ENCODE measurements at regions of chr11 and their contacts with region 1.

Region 1: DNA sequence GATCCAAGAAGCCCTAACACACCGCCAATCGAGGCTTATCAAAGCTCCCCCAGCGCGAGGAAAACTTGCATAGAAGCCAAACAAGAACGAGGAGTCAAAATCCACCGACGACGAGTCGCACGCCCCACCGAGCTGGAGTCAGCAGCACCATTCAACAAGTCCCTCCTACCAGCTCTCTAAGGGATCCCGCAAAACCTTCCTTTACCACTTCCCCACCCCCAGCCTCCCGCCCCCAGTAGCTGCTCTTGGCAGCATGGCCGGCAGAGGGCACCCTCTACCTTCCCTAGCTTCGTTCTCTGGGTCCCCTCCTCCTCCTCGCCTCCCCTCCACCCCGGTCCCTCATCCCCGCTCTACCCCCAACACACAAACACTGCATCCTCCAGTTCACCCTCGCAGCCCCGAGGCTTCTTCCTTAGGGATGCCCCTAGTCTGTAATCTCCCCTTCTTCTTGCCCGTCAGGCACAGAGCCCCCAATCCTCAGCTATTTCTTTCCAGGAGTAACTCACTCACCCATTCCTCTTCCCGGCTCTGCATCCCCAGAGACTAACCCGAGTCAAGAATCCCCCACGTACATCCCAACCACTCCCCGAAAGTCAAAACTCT is 1.3 kb downstream of the BDNF start:
- DNase-seq: peak; percentile 89
- H3K4me3 Mint-ChIP-seq: peak overlapping the region; percentile 97
- H3K27ac Mint-ChIP-seq: no peak overlapping the region
- H3K4me1 Mint-ChIP-seq: peaks cover 11% of the 10 kb centered on the region
- H3K27me3 Mint-ChIP-seq: no peaks in the 10 kb centered on the region
- CTCF ChIP-seq: peak; percentile 84

Region 2: DNA sequence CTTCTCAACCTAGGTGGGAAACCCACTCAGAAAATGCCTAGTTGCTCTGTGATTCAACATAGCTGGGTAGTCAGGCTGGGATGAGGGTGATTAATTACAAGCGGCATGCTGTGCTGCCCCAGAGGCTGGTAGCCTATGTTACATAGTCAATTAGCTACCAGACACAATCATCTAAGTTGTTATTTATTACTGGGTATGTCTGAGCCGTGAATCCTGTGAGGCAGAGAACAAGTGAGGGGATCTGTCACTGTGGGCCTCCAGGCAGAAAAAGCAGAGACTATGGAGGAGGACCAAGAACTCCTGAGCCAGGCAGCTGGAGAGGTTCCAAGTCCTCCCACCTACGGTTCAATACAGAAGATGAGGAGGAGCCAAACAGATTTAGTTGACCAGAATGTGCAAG is 187.9 kb after region 1 on chr11:
- CTCF ChIA-PET with region 1: no interaction called
- POLR2A ChIA-PET with region 1: no interaction called
- intact Hi-C with region 1: no loop called
- DNase-seq: no peak
- H3K4me3 Mint-ChIP-seq: no peak overlapping the region
- H3K27ac Mint-ChIP-seq: no peak overlapping the region
- H3K4me1 Mint-ChIP-seq: peaks cover 15% of the 10 kb centered on the region
- H3K27me3 Mint-ChIP-seq: peaks cover 13% of the 10 kb centered on the region
- CTCF ChIP-seq: no peak

Region 3: DNA sequence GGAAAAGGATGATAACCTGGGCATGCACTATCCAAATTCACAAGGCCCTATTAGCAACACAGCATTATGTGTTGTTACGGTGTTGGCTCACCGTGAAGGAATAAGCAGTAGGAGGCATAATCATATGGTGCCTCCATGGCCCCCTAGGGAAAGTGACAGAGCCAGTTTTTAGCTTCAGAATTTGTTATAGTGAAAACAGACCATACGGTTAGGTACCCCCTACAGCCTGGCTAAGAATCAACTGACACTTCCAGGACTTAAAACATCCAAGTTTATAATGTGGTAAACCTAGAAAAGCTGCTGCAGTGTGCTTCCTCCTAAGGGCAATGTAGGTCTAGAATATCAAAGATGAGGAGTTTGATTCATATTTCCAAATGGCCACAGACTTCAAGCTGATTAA is 378.5 kb after region 1 on chr11:
- CTCF ChIA-PET with region 1: interaction called, 10 read pairs
- POLR2A ChIA-PET with region 1: no interaction called
- intact Hi-C with region 1: no loop called
- DNase-seq: no peak
- H3K4me3 Mint-ChIP-seq: no peak overlapping the region
- H3K27ac Mint-ChIP-seq: no peak overlapping the region
- H3K4me1 Mint-ChIP-seq: peaks cover 2% of the 10 kb centered on the region
- H3K27me3 Mint-ChIP-seq: no peaks in the 10 kb centered on the region
- CTCF ChIP-seq: no peak

Region 4: DNA sequence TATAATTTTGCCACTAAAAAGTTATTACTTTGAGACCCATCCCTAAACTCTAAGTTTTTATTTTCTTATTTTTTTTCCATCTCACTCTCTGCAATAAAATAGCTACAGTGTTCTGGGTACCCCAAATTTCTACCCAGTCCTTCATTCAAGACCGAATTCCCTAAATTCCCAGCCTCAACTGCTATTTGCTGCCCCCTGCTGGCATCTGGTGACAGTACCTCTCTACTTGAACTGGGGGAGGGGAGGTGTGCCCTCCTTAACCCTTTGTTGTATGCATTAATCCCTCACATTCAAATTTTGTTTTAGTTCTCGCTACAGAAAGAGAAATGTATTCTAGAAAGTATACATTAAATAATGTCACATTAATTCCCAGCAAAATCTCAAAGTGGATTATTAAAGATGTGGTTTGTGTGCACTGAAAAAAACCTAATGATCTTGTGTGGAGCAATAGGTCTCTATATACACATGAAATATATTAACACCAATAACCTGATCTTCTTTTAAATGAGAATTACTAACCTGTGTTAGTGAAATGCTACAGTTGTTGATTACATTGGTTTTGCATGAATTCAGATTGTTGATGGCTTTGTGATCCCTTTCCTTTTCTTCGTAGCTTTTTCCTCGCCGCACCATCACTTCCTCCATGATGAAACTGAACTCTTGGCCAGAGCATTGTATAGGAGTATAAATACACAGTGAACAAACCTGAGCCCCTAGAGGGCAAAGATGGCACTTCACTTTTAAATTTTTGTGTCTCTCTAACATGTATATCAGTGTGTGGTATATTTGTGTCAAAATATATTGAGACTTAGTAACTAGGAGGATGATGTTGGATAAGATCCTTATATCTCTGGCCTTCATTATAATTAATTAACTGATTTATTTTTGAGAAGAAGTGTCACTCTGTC is 999.2 kb after region 1 on chr11:
- CTCF ChIA-PET with region 1: interaction called, 49 read pairs
- POLR2A ChIA-PET with region 1: no interaction called
- intact Hi-C with region 1: loop called (anchors 1 kb)
- DNase-seq: peak; percentile 79
- H3K4me3 Mint-ChIP-seq: no peak overlapping the region
- H3K27ac Mint-ChIP-seq: peak overlapping the region; percentile 36
- H3K4me1 Mint-ChIP-seq: peaks cover 41% of the 10 kb centered on the region
- H3K27me3 Mint-ChIP-seq: no peaks in the 10 kb centered on the region
- CTCF ChIP-seq: peak; percentile 76

Region 5: GRCh38 chr11:29159552-29160465 is 1460.8 kb after region 1 on chr11:
- CTCF ChIA-PET with region 1: interaction called, 48 read pairs
- POLR2A ChIA-PET with region 1: interaction called, 5 read pairs
- intact Hi-C with region 1: loop called (anchors 1 kb)
- DNase-seq: peak; percentile 80
- H3K4me3 Mint-ChIP-seq: no peak overlapping the region
- H3K27ac Mint-ChIP-seq: no peak overlapping the region
- H3K4me1 Mint-ChIP-seq: peaks cover 11% of the 10 kb centered on the region
- H3K27me3 Mint-ChIP-seq: no peaks in the 10 kb centered on the region
- CTCF ChIP-seq: peak; percentile 77

Region 6: DNA sequence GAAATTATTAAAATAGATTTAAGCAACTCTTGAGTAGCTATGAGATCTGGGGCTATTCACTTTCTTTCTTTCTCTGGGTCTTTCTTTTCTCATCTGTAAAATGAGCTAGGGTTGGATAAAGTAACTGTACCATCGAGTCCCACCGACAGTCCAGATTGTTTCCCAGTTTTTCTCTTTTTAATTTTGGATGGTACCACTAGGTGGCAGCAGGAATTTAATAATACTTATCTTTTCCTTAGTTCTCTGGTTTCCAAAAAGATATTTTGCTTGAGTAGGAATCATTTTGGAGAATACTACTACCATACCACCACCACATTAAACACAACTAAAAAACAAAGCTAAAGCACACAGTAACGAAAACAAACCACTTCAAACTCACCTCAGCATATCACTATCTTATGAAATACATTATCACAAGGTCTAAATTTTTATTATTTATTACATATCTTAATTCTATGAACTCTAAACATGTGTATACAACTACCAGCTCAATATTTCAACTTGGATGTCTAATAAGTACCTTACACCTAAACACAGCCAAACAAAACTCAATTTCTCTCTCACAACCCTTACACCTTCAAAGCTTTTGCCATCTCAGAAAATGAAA is 1733.8 kb after region 1 on chr11:
- CTCF ChIA-PET with region 1: interaction called, 3 read pairs
- POLR2A ChIA-PET with region 1: no interaction called
- intact Hi-C with region 1: loop called (anchors 10 kb)
- DNase-seq: peak; percentile 47
- H3K4me3 Mint-ChIP-seq: no peak overlapping the region
- H3K27ac Mint-ChIP-seq: no peak overlapping the region
- H3K4me1 Mint-ChIP-seq: peaks cover 8% of the 10 kb centered on the region
- H3K27me3 Mint-ChIP-seq: no peaks in the 10 kb centered on the region
- CTCF ChIP-seq: peak; percentile 69

Measured in MCF 10A (cell line).